ENCODE measurements at regions of chr3 and their contacts with region 1.

Region 1: DNA sequence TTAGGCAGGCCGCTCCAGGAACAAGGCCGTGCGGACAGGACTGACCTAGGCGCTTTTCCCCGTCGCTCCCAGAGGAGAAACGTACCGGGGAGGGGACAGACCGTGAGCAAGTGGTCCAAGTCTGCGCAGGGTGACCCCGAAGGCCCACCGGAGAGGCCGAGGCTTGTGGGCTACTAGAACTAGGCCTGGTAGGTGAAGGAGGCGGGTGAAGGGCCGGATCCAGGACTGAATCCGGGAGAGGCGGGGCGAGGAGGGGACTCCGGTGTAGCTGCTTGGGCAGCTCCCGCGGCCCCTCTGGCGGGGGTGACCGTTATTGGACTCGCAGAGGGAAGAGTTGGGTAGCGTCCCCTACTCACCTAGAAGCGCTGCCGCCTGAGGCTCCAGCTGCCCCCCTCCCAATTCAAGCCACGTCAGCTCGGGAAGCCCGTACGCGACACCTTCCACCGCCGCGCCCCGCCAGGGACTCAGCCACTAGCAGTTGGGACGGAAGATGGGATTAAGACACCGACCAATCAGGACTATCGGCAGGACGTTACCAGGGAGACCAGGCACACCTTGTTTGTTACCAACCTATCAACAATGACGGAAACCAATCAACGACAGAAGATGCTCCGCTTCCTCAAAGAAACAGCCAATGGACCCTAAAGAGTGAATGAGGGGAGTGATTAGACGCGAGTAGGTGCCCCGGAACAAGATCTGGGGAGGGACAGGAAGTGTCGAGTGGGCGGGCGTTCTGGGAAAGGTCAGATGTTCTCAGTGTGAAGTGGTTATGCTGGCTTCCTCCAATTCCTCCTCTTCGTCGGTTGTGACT is at the start of gene GOLGB1:
- DNase-seq: peak; percentile 100
- ATAC-seq: peak; percentile 98
- H3K4me3 ChIP-seq: peak within 1 kb of the TSS; percentile 90 to 97 (median 90)
- H3K27ac ChIP-seq: peak within 1 kb of the TSS; percentile 98
- H3K4me1 ChIP-seq: peaks cover 15% of the 10 kb centered on the region
- H3K27me3 ChIP-seq: no peaks in the 10 kb centered on the region; a peak in 1 of 5 replicates
- CTCF ChIP-seq: no peak
- EP300 ChIP-seq: no peak
- POLR2A ChIP-seq: peak; percentile 96 to 99
- RAD21 ChIP-seq: peak; percentile 53
- total RNA-seq, gene GOLGB1: 39.5 and 53.1 TPM in 2 replicates

Region 2: DNA sequence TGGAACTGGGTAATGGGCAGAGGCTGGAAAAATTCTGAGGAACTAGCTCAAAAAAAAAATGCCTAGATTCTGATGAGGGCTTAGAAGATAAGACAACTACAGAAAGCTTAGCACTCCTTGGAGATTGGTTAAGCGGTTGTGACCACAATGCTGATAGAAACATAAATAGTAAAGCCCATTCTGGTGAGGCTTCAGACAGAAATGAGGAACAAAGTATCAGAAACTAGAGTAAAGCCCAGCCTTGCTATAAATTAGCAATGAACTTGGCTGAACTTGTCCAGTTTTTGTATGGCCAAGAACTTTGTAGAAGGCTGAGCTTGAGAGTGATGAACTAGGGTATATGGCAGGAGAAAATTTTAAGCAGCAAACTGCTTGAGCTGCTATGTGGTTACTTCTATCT is 25.4 kb before region 1 on chr3:
- CTCF ChIA-PET with region 1: no interaction called
- POLR2A ChIA-PET with region 1: no interaction called
- in situ Hi-C with region 1: no loop called
- intact Hi-C with region 1: no loop called
- DNase-seq: no peak
- ATAC-seq: no peak
- H3K4me3 ChIP-seq: no peak overlapping the region
- H3K27ac ChIP-seq: no peak overlapping the region
- H3K4me1 ChIP-seq: no peaks in the 10 kb centered on the region
- H3K27me3 ChIP-seq: no peaks in the 10 kb centered on the region
- CTCF ChIP-seq: no peak
- EP300 ChIP-seq: no peak
- POLR2A ChIP-seq: no peak
- RAD21 ChIP-seq: no peak

Region 3: DNA sequence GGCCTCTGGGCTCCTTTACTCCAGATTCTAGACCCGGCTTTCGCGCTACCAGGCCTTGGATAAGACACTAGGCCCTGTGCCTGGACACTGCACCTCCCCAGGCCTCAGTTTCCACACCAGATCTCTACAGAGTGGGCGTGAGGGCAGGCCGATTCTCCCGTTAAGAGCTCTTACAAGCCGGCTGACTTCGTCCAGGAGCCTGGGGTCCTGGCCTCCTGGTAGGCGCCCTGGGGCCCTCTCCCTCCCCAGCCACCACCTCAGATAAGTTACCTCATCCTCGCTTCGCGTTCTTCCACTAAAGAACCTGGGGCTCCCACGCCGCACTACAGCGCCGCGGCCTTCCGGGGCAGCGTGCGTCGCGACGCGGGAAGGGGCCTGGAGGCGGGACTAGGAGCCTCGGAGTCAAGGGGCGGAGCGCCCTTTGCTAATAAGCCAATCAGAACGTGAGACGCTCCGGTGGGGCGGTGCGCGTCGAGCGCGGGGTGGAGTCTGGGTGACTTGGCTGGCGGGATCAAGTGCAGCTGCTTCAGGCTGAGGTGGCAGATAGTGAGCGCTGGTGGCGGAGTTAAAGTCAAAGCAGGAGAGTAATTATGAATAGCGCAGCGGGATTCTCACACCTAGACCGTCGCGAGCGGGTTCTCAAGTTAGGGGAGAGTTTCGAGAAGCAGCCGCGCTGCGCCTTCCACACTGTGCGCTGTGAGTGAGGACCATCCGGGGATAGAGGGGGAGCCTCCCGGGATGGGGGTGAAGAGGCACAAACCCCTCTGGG is 85.4 kb after region 1 on chr3 and contains the starts of genes EAF2 and IQCB1:
- CTCF ChIA-PET with region 1: no interaction called
- POLR2A ChIA-PET with region 1: interaction called, 3 read pairs
- in situ Hi-C with region 1: no loop called
- intact Hi-C with region 1: loop called (anchors 10 kb)
- DNase-seq: peak; percentile 90
- ATAC-seq: peak; percentile 99
- H3K4me3 ChIP-seq: peak within 1 kb of the TSS; percentile 66 to 85 (median 66)
- H3K27ac ChIP-seq: peak within 1 kb of the TSS; percentile 79
- H3K4me1 ChIP-seq: peaks cover 36% of the 10 kb centered on the region
- H3K27me3 ChIP-seq: no peaks in the 10 kb centered on the region
- CTCF ChIP-seq: peak; percentile 40; the same call in 1 of the 2 replicates
- EP300 ChIP-seq: no peak
- POLR2A ChIP-seq: peak; percentile 83 to 89
- RAD21 ChIP-seq: no peak
- total RNA-seq, gene EAF2: 14.6 and 20.1 TPM in 2 replicates
- total RNA-seq, gene IQCB1: 41.4 and 44.8 TPM in 2 replicates

Measured in HepG2 (cell line).